HepG2 (cell line): ENCODE measurements at regions of chr6 and their contacts with region 1.

Region 1: DNA sequence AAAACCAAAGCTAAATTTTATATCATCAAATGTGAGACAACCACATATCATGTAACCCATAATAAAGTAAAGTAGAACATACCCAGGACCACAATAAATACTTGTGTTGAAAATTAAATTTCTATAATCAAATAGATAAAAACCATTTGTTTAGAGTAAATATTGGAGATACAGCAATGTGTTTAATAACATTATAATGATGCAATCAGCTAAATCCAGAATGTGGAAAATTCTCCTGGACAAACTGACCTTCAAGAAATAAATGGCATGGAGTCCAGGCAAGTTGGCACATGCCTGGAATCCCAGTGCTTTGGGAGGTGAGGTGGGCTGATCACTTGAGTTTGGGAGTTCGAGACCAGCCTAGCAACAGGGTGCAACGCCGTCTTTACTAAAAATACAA is 84.0 kb downstream of the GPX5 start:
- DNase-seq: no peak
- ATAC-seq: no peak
- H3K4me3 ChIP-seq: no peak overlapping the region
- H3K27ac ChIP-seq: no peak overlapping the region
- H3K4me1 ChIP-seq: peaks cover 21% of the 10 kb centered on the region
- H3K27me3 ChIP-seq: 0 out of 5 replicates have a peak, but pooled peaks cover 0 to 4% of the 10 kb centered on the region in 2 experiments
- CTCF ChIP-seq: no peak
- EP300 ChIP-seq: no peak
- POLR2A ChIP-seq: no peak
- RAD21 ChIP-seq: no peak

Region 2: GRCh38 chr6:28643017-28643740 is 33.5 kb after region 1 on chr6:
- CTCF ChIA-PET with region 1: no interaction called
- POLR2A ChIA-PET with region 1: no interaction called
- in situ Hi-C with region 1: no loop called
- intact Hi-C with region 1: loop called (anchors 1 kb)
- DNase-seq: peak; percentile 69
- ATAC-seq: peak; percentile 72
- H3K4me3 ChIP-seq: 0 out of 6 replicates have a peak overlapping the region, but pooled peaks of 1 of the 3 experiments have one; percentile 5
- H3K27ac ChIP-seq: no peak overlapping the region
- H3K4me1 ChIP-seq: peaks cover 11% of the 10 kb centered on the region; the same call in 1 of the 2 replicates
- H3K27me3 ChIP-seq: no peaks in the 10 kb centered on the region
- CTCF ChIP-seq: no peak
- EP300 ChIP-seq: no peak
- POLR2A ChIP-seq: no peak
- RAD21 ChIP-seq: no peak